ENCODE measurements at regions of chr12 and their contacts with region 1.

Region 1: DNA sequence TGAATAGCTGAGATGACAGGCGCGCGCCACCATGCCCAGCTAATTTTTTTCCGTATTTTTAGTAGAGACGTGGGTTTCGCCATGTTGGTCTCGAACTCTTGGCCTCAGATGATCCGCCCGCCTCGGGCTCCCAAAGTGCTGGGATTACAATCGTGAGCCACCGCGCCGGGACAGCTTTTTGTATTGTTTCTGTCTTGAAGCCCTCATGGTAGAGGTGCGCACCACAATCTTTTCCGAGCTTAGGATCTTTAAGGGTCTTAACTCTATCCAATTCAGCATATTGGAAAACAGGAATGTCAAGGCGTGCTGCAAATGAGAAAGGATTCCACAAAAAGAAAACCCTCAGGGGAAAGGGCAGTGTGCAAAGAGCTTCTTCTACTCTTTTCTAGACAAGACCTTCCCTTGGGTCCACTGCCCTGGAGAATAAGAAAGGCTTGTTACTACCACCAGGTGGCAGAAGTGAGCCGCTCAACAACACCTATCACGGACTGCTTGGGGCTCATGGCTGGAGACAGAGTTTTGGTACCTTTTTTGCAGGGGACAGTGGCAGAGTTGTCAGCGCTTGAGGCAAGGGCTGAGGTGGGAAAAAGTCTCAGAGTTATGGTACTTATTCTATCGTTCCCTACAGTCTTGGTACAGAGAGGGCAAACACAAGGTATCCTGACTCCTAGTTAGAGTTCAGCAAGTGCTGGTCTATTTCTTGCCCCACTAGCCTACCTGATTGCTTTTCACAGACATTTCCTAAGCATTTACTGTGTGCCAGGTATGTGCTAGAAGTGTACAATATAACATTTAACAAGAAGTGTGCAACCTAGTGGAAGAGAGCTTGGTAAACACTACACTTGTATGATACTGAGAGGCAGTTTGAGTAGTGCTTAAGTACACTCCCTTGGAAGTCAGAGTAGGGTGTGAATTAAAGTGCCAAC is 16.4 kb upstream of the SP7 start:
- DNase-seq: peak; percentile 94
- H3K4me3 Mint-ChIP-seq: no peak overlapping the region
- H3K27ac Mint-ChIP-seq: no peak overlapping the region
- H3K4me1 Mint-ChIP-seq: peaks cover 6% of the 10 kb centered on the region
- H3K27me3 Mint-ChIP-seq: no peaks in the 10 kb centered on the region

Region 2: DNA sequence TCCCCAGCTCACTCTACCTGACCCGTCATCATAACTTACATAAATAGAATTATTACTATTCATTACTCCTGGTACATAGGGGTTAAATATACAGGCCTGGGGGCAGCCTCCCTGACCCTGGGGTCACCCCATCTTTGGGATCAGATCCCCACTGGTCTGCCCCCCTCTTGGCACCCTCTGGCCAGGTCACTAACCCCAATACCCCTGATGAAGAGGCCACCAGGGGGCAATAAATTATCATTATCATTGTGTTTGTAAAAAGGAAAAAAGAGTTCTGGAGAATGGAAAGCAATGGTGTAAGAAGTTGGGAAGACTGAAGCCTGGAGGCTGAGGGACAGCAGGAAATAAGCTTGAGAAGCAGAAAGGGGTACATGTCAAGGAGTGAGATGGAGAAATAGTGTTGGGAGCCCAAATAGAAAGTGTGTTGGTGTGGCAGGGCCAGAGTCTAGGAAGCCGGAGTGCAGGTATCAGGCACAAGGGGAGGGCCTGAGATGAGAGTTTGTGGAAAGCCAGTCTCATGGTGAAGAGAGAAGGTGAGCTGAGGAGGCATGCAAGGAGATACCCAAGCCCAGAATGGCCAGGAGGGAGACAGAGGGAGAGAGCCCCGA is 25.1 kb before region 1 on chr12:
- CTCF ChIA-PET with region 1: interaction called, 196 read pairs
- intact Hi-C with region 1: no loop called
- DNase-seq: peak; percentile 15
- H3K4me3 Mint-ChIP-seq: no peak overlapping the region
- H3K27ac Mint-ChIP-seq: no peak overlapping the region
- H3K4me1 Mint-ChIP-seq: peaks cover 15% of the 10 kb centered on the region
- H3K27me3 Mint-ChIP-seq: peaks cover 2% of the 10 kb centered on the region

Region 3: DNA sequence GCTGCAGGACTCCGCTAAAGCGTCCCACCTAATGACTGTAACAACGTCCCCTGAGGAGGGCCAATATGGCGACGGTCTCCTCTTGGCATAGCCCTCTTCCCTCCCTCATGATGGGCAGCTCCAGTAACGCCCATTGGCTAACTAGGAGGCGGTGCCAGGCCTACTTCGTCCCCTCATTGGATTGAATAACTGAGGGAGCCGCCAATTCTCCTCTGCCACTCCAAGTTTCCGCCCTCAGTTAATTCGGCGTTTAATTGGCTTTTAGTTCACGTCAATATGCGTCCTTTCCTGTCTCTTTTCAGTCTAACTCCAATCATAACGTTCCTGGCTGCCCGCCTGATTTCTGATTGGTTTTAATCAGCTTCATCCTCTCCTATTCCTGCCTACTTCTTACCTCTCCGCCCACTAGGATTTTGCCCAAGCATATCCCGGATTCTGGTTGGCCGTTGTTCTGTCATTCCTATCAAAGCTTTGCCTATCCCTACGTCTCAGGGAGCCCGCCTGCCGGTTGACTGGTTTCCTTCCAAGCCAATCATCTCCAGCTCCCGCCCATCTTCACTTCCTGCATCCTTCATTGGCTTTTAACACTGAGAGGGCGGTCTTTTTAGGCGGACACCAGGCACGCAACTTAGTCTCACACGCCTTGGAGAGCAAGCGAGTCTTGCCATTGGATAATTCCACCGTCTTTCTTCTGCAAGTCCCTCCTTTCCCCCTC is 27.0 kb after region 1 on chr12:
- CTCF ChIA-PET with region 1: interaction called, 28 read pairs
- intact Hi-C with region 1: loop called (anchors 1 kb)
- DNase-seq: peak; percentile 99
- H3K4me3 Mint-ChIP-seq: no peak overlapping the region
- H3K27ac Mint-ChIP-seq: no peak overlapping the region
- H3K4me1 Mint-ChIP-seq: peaks cover 48% of the 10 kb centered on the region
- H3K27me3 Mint-ChIP-seq: no peaks in the 10 kb centered on the region

Region 4: DNA sequence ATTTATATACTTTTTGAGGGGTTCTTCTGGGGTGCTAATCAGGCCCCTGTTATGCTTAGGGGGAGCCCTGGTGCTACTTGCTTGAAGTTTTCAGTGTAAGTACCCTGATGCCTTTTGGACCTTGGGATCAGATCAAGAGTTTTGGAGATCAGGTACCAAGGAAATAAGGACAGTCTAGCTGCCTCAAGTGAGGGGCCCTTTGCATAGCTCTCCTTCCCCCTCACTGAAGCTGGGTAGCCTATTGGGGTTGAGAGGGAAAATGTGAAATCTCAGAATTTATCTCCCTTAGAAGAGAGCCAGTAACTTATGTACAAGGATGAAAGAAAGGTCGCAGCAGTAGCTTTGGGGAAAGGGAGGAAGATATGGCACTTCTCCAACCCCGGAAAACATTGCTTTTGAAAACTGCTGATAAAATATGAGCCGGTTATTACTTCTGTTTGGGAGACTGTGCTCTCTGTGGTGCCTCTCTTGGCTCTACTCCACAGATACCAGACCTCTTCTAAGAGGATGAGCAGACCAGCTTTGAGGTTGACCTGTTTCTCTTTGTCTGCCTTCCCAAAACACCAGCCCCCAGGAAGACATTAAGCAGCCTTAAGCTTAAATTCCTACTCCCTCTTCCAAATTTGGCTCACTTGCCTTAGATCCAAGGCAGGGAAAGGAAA is 62.3 kb after region 1 on chr12:
- CTCF ChIA-PET with region 1: interaction called, 163 read pairs
- intact Hi-C with region 1: no loop called
- DNase-seq: no peak
- H3K4me3 Mint-ChIP-seq: no peak overlapping the region
- H3K27ac Mint-ChIP-seq: no peak overlapping the region
- H3K4me1 Mint-ChIP-seq: peaks cover 74% of the 10 kb centered on the region
- H3K27me3 Mint-ChIP-seq: no peaks in the 10 kb centered on the region

Region 5: GRCh38 chr12:53508534-53509199 is 156.1 kb after region 1 on chr12:
- CTCF ChIA-PET with region 1: interaction called, 58 read pairs
- intact Hi-C with region 1: loop called (anchors 1 kb)
- DNase-seq: peak; percentile 93
- H3K4me3 Mint-ChIP-seq: no peak overlapping the region
- H3K27ac Mint-ChIP-seq: peak overlapping the region; percentile 10
- H3K4me1 Mint-ChIP-seq: peaks cover 11% of the 10 kb centered on the region
- H3K27me3 Mint-ChIP-seq: no peaks in the 10 kb centered on the region

Measured in activated naive CD4-positive, alpha-beta T cell treated with anti-CD3 and anti-CD28 coated beads for 36 hours (primary cell).